ENCODE measurements at regions of chr20 and their contacts with region 1.

Region 1: DNA sequence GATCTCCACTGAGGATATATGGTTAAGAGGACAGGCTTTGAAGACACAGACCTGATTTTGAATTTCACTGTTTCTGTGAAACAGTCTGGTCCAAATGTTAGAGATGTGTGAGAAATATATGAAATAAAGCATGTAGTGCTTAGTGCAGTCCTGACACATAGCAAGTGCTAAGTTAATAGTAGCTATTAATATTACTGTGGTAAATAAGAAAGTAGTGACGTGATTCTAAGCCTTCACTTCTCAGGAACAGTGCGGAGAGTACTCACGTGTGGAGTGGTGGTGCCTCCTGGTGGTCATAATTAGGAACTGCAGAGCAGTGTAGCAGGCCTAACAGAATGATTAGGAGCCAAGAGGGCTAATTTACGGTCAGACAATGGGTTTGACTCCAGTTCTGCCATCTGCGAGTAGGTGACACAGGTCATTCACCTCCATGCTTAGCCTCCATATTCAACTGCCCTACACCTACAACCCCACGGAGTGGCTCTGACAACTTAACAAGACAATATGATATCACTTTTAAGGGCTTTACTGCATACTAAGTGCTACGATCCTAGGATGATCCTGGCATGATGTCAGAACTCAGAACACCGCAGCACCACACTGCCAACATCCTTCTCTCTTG is 106.2 kb downstream of the JPH2 start:
- DNase-seq: peak; percentile 68
- ATAC-seq: peak; percentile 92
- H3K4me3 ChIP-seq: no peak overlapping the region
- H3K27ac ChIP-seq: no peak overlapping the region
- H3K4me1 ChIP-seq: peaks cover 7 to 19% of the 10 kb centered on the region in 2 experiments
- H3K27me3 ChIP-seq: no peaks in the 10 kb centered on the region
- CTCF ChIP-seq: peak; percentile 92 to 99 (median 95)
- POLR2A ChIP-seq: no peak
- RAD21 ChIP-seq: peak; percentile 98

Region 2: DNA sequence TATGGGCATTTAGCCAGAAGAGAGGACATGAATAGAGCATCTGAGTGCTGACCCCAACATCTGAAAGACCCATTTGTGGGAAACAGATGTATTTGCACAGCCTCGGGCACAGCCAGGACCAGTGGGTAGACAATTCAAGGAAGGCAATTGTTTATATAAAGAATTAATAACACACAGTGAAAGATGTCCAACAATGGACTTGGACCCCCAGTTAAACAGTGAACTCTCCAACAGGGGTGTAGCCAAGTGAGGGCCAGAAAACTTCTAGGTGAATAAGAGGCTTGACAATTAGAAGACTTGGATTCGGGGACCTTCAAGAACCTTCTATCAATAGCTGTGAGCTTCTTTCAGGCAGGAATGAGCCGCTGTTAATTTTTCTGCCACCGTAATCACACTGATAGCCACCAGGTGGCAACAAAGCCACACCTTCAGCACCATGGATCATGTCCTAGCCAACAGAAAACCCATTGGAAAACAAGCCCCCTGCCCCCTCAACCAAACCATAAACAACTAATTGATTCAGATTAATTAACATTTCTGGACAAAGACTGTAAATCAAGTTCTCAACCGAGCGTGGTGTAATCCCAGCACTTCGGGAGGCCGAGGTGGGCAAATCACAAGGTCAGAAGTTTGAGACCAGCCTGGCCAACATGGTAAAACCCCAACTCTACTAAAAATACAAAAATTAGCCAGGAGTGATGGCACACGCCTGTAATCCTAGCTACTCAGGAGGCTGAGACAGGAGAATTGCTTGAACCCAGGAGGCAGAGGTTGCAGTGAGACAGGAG is 631.8 kb before region 1 on chr20:
- CTCF ChIA-PET with region 1: interaction called, 8 read pairs
- POLR2A ChIA-PET with region 1: no interaction called
- RAD21 ChIA-PET with region 1: interaction called in 1 of 2 experiments, 3 read pairs
- intact Hi-C with region 1: loop called (anchors 2 kb)
- DNase-seq: peak; percentile 36
- ATAC-seq: peak; percentile 71
- H3K4me3 ChIP-seq: no peak overlapping the region
- H3K27ac ChIP-seq: no peak overlapping the region
- H3K4me1 ChIP-seq: peaks cover 0 to 10% of the 10 kb centered on the region in 2 experiments; a peak in 2 of 4 replicates
- H3K27me3 ChIP-seq: no peaks in the 10 kb centered on the region
- CTCF ChIP-seq: peak; percentile 68 to 86 (median 75); a peak in 5 of 6 replicates
- POLR2A ChIP-seq: no peak
- RAD21 ChIP-seq: peak; percentile 93

Region 3: DNA sequence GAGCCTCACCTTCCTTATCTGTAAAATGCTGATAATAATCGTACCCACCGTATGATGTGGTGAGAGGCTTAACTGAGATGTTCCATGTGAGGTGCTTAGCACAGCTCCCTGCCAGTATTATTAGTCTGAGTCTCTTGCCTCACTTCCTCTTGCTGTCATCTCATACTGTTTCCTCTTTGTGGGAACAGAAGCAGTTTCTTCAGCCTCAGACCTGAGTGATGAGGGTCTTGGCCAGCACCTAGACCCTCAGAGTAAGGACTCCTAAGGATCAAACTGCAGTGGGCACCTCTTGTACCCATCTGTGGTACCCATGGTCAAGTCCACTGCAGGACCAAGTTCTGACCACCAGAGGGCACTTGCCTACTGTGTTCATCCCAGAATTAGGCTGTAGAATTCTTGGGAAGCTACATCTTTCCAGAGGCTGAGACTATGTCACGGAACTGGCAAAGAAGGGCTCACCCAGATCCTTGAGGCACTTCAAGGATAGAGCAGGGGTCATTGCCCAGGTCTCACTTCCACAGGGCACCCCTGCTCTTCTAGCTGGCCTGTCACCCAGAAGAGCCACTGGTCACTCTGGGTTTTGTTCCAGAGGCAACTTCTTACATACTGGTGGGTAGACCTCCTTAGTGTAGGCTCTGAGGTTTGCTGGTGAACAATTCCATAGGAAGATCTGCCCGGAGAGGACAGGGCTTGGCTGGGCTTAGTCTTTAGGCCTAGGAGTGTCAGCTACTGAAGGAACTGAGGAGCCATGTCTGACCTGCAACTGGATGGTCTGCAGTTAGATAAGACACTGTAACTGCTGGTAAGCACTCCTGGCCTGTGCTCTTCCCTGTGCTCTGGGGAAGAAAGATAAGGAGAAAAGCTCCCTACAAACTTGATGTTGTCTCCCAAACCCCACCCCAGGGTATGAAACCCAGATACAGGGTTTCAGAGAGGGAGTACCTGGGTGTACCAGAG is 542.6 kb before region 1 on chr20:
- CTCF ChIA-PET with region 1: interaction called, 8 read pairs
- POLR2A ChIA-PET with region 1: no interaction called
- RAD21 ChIA-PET with region 1: interaction called in 1 of 2 experiments, 3 read pairs
- intact Hi-C with region 1: loop called (anchors 5 kb)
- DNase-seq: peak; percentile 24
- ATAC-seq: peak; percentile 87
- H3K4me3 ChIP-seq: no peak overlapping the region
- H3K27ac ChIP-seq: no peak overlapping the region
- H3K4me1 ChIP-seq: no peaks in the 10 kb centered on the region
- H3K27me3 ChIP-seq: no peaks in the 10 kb centered on the region
- CTCF ChIP-seq: peak; percentile 54 to 97 (median 94); a peak in 5 of 6 replicates
- POLR2A ChIP-seq: no peak
- RAD21 ChIP-seq: peak; percentile 80

Region 4: DNA sequence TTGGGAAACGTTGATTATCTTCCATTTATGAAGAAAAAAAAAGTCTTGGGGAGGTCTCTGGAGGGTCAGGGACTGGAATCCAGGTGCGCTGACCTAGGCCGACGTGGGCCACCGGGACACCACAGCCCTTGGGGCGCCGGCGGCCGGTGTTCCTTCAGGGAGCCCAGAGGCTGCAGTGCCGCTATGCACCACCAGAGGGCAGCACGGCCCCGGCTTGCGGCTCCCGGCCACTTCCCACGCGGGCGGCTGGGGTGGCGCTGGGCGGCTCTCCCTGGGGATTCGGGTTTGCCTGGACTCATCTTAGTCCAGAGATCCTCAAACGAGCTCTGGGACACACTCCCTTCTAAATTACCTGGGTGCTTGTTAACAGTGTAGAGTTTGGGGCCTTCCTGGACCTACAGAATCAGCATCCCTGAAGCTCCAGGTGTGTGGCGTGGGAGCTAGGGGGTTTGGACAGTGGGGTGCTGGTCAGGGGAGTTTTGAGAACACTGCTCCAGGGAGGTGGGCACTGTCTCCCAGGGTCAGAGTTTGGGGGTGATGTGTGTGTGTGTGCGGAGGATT is 330.9 kb before region 1 on chr20:
- CTCF ChIA-PET with region 1: interaction called, 32 read pairs
- POLR2A ChIA-PET with region 1: interaction called, 3 read pairs
- RAD21 ChIA-PET with region 1: interaction called, 3 to 18 read pairs
- intact Hi-C with region 1: loop called (anchors 1 kb)
- DNase-seq: peak; percentile 29
- ATAC-seq: peak; percentile 96
- H3K4me3 ChIP-seq: no peak overlapping the region; a peak in 1 of 4 replicates
- H3K27ac ChIP-seq: no peak overlapping the region
- H3K4me1 ChIP-seq: peaks cover 2 to 39% of the 10 kb centered on the region in 2 experiments; a peak in 3 of 4 replicates
- H3K27me3 ChIP-seq: no peaks in the 10 kb centered on the region
- CTCF ChIP-seq: peak; percentile 96 to 99 (median 98)
- POLR2A ChIP-seq: no peak
- RAD21 ChIP-seq: peak; percentile 99

Region 5: GRCh38 chr20:43840382-43841070 is 240.2 kb before region 1 on chr20:
- CTCF ChIA-PET with region 1: interaction called, 7 read pairs
- POLR2A ChIA-PET with region 1: no interaction called
- RAD21 ChIA-PET with region 1: interaction called in 1 of 2 experiments, 3 read pairs
- intact Hi-C with region 1: loop called (anchors 1 kb)
- DNase-seq: peak; percentile 12
- ATAC-seq: peak; percentile 80
- H3K4me3 ChIP-seq: no peak overlapping the region
- H3K27ac ChIP-seq: no peak overlapping the region
- H3K4me1 ChIP-seq: peaks cover 3 to 24% of the 10 kb centered on the region in 2 experiments; a peak in 3 of 4 replicates
- H3K27me3 ChIP-seq: no peaks in the 10 kb centered on the region
- CTCF ChIP-seq: peak; percentile 48 to 74 (median 65); a peak in 5 of 6 replicates
- POLR2A ChIP-seq: no peak
- RAD21 ChIP-seq: peak; percentile 45

Region 6: GRCh38 chr20:43914311-43915210 is 166.2 kb before region 1 on chr20 and contains the start of gene TOX2:
- CTCF ChIA-PET with region 1: no interaction called
- POLR2A ChIA-PET with region 1: interaction called, 3 read pairs
- RAD21 ChIA-PET with region 1: no interaction called
- intact Hi-C with region 1: loop called (anchors 10 kb)
- DNase-seq: no peak
- ATAC-seq: peak; percentile 87
- H3K4me3 ChIP-seq: peak within 1 kb of the TSS; percentile 69 to 81
- H3K27ac ChIP-seq: peak within 1 kb of the TSS; percentile 34; the same call in 1 of the 2 replicates
- H3K4me1 ChIP-seq: peaks cover 7 to 40% of the 10 kb centered on the region in 2 experiments; a peak in 3 of 4 replicates
- H3K27me3 ChIP-seq: no peaks in the 10 kb centered on the region
- CTCF ChIP-seq: no peak
- POLR2A ChIP-seq: no peak
- RAD21 ChIP-seq: no peak
- total RNA-seq, gene TOX2: 39.6 TPM

Region 7: GRCh38 chr20:44056010-44056698 is 24.6 kb before region 1 on chr20:
- CTCF ChIA-PET with region 1: no interaction called
- POLR2A ChIA-PET with region 1: no interaction called
- RAD21 ChIA-PET with region 1: no interaction called
- intact Hi-C with region 1: loop called (anchors 1 kb)
- DNase-seq: no peak
- ATAC-seq: peak; percentile 96
- H3K4me3 ChIP-seq: no peak overlapping the region
- H3K27ac ChIP-seq: no peak overlapping the region
- H3K4me1 ChIP-seq: no peaks in the 10 kb centered on the region
- H3K27me3 ChIP-seq: no peaks in the 10 kb centered on the region
- CTCF ChIP-seq: peak; percentile 39 to 78 (median 69); a peak in 5 of 6 replicates
- POLR2A ChIP-seq: no peak
- RAD21 ChIP-seq: peak; percentile 65